Activated CD4-positive, alpha-beta T cell treated with anti-CD3 and anti-CD28 coated beads, Interleukin-2, amount 10 ng/mL, durations not matched to agents 24 days and 14 days (primary cell): ENCODE measurements at regions of chr10 and their contacts with region 1.

Region 1: GRCh38 chr10:86710987-86711512 is 42.7 kb downstream of the LDB3 start:
- DNase-seq: peak; percentile 96
- H3K4me3 Mint-ChIP-seq: peak overlapping the region; percentile 94
- H3K27ac Mint-ChIP-seq: peak overlapping the region; percentile 97
- H3K4me1 Mint-ChIP-seq: peaks cover 13% of the 10 kb centered on the region
- H3K27me3 Mint-ChIP-seq: no peaks in the 10 kb centered on the region

Region 2: GRCh38 chr10:86652361-86653202 is 58.5 kb before region 1 on chr10:
- intact Hi-C with region 1: no loop called
- DNase-seq: no peak
- H3K4me3 Mint-ChIP-seq: no peak overlapping the region
- H3K27ac Mint-ChIP-seq: no peak overlapping the region
- H3K4me1 Mint-ChIP-seq: no peaks in the 10 kb centered on the region
- H3K27me3 Mint-ChIP-seq: no peaks in the 10 kb centered on the region

Region 3: DNA sequence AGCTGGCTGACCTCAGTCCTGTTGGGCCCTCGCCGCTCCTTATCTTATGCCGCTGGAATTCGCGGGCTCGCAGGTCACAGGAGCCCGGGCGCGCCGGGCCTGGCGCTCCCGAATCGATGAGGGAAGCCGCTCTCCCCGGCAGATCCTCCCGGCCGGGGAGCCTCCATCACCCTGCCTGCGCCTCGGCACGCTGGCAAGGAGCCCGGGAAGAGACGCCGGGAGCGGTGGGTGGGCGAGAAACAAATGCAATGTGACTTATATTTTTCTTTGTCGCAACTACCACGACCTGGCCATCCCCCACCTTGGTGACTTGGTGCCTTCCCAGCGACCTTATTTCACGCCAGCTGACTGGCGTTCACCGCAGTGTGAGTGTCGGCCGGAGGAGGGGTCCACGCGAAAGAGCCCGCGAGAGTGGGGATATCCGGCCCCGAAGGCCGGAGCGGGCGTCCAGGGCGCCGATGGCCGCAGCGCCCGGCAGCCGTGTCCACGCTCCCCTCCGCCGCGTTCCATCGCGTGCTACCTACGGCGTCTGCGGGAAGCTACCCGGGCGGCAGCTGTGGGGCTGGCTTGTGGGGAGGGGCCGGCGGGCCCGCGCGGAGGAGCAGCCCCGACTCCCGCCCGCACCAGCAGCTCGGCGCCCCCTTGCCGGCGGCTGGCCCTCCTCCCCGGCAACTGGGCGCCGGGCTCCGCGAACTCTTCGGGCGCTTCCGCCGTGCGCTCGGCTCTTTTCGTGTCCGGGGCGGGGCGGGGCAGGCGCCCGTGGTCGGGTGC is 44.9 kb after region 1 on chr10:
- intact Hi-C with region 1: loop called (anchors 1 kb)
- DNase-seq: peak; percentile 97
- H3K4me3 Mint-ChIP-seq: peak overlapping the region; percentile 85
- H3K27ac Mint-ChIP-seq: peak overlapping the region; percentile 86
- H3K4me1 Mint-ChIP-seq: peaks cover 40% of the 10 kb centered on the region
- H3K27me3 Mint-ChIP-seq: peaks cover 36% of the 10 kb centered on the region

Region 4: GRCh38 chr10:86936661-86937501 is 225.8 kb after region 1 on chr10:
- intact Hi-C with region 1: loop called (anchors 1 kb)
- DNase-seq: peak; percentile 54
- H3K4me3 Mint-ChIP-seq: no peak overlapping the region
- H3K27ac Mint-ChIP-seq: no peak overlapping the region
- H3K4me1 Mint-ChIP-seq: peaks cover 2% of the 10 kb centered on the region
- H3K27me3 Mint-ChIP-seq: peaks cover 4% of the 10 kb centered on the region

Region 5: GRCh38 chr10:87504640-87505365 is 793.8 kb after region 1 on chr10 and contains the start of gene MINPP1:
- intact Hi-C with region 1: loop called (anchors 5 kb)
- DNase-seq: peak; percentile 92
- H3K4me3 Mint-ChIP-seq: peak within 1 kb of the TSS; percentile 90
- H3K27ac Mint-ChIP-seq: peak within 1 kb of the TSS; percentile 85
- H3K4me1 Mint-ChIP-seq: peaks cover 28% of the 10 kb centered on the region
- H3K27me3 Mint-ChIP-seq: peaks cover 14% of the 10 kb centered on the region
- total RNA-seq, gene MINPP1: 9.4 and 9.6 TPM in 2 replicates